ENCODE measurements at regions of chr19 and their contacts with region 1.

Region 1: GRCh38 chr19:19420570-19421298 is 15.3 kb downstream of the GATAD2A start:
- DNase-seq: no peak
- CTCF ChIP-seq: no peak

Region 2: GRCh38 chr19:19444681-19445155 is 24.0 kb after region 1 on chr19:
- CTCF ChIA-PET with region 1: interaction called, 10 read pairs
- POLR2A ChIA-PET with region 1: no interaction called
- DNase-seq: no peak
- CTCF ChIP-seq: no peak

Region 3: DNA sequence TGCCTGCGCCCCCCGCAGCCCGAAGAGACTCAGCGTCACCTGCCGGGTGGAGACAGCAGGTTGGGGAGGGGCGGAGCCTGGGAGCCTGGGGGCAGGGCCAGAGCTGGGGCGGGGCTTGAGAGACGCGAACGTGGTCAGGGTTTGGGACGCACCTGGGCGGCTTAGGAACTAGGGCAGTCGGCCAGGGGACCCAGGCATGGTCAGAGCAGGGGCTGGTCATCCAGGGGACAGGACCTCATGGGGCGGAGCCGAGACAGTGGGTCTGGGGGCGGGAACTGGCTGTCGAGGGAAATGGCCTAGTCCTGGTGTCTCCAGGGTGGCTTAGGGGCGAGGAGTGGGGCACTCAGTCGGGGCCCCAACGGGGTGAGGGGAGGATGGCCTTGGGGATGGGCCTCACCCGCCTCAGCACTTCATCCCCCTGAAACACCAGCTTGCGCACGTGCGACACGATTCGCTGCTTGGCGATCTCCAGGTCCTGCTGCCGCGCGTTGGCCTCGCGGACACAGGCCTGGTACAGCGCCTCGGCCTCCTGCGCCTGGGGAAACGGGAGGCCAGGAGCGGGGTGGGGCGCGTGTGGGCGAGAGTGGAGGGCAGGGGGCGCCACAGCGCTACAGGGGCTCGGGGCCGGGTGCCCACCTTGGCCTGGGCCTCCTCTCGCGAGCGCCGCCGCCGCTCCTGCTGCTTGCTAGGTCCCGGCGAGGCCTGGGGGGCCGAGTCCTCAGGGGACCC is 217.0 kb after region 1 on chr19:
- CTCF ChIA-PET with region 1: no interaction called
- POLR2A ChIA-PET with region 1: no interaction called
- DNase-seq: no peak
- CTCF ChIP-seq: no peak